ENCODE measurements at regions of chr1 and their contacts with region 1.

Region 1: GRCh38 chr1:160085686-160086455 is 4.5 kb downstream of the KCNJ9 start:
- DNase-seq: peak; percentile 92
- ATAC-seq: peak; percentile 76
- H3K4me3 Mint-ChIP-seq: no peak overlapping the region
- H3K27ac Mint-ChIP-seq: no peak overlapping the region
- H3K4me1 Mint-ChIP-seq: peaks cover 5% of the 10 kb centered on the region
- H3K27me3 Mint-ChIP-seq: peaks cover 21% of the 10 kb centered on the region
- CTCF ChIP-seq: peak; percentile 91

Region 2: DNA sequence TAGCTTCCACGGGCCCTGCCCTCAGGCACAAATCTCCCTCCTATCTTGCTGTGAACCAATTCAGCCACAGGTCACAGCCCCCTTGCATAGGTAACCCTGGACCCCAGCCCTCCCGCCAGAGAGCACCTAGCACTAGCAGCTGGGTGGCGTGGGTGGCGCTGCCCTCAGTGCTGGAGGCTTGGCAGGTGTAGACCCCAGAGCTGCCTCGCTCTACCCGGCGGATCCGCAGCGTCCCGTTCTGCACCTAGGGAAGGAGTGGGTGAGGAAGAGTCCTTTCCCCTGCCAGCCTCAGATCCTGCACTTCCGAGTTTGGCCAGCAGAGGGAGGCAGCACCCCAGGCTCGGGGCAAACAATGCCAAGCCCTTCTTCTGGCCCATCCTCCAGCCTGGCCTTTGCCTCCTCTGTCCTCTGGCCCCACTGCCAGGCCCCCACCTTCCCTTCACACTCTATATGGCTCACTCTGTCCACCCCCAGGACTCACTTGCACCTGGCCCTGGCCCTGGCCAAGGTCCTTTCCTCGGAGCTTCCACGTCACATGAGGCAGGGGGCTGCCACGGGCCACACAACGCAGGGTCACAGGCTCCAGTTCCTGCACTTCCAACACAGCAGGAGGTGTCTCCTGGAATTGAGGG is 149.5 kb before region 1 on chr1:
- CTCF ChIA-PET with region 1: interaction called, 6 read pairs
- POLR2A ChIA-PET with region 1: no interaction called
- intact Hi-C with region 1: loop called (anchors 5 kb)
- DNase-seq: peak; percentile 85
- ATAC-seq: peak; percentile 96
- H3K4me3 Mint-ChIP-seq: no peak overlapping the region
- H3K27ac Mint-ChIP-seq: no peak overlapping the region
- H3K4me1 Mint-ChIP-seq: peaks cover 3% of the 10 kb centered on the region
- H3K27me3 Mint-ChIP-seq: peaks cover 2% of the 10 kb centered on the region
- CTCF ChIP-seq: peak; percentile 97

Region 3: GRCh38 chr1:159970932-159971342 is 114.9 kb before region 1 on chr1:
- CTCF ChIA-PET with region 1: no interaction called
- POLR2A ChIA-PET with region 1: no interaction called
- intact Hi-C with region 1: no loop called
- DNase-seq: no peak
- ATAC-seq: no peak
- H3K4me3 Mint-ChIP-seq: no peak overlapping the region
- H3K27ac Mint-ChIP-seq: no peak overlapping the region
- H3K4me1 Mint-ChIP-seq: no peaks in the 10 kb centered on the region
- H3K27me3 Mint-ChIP-seq: peaks cover 14% of the 10 kb centered on the region
- CTCF ChIP-seq: no peak

Region 4: DNA sequence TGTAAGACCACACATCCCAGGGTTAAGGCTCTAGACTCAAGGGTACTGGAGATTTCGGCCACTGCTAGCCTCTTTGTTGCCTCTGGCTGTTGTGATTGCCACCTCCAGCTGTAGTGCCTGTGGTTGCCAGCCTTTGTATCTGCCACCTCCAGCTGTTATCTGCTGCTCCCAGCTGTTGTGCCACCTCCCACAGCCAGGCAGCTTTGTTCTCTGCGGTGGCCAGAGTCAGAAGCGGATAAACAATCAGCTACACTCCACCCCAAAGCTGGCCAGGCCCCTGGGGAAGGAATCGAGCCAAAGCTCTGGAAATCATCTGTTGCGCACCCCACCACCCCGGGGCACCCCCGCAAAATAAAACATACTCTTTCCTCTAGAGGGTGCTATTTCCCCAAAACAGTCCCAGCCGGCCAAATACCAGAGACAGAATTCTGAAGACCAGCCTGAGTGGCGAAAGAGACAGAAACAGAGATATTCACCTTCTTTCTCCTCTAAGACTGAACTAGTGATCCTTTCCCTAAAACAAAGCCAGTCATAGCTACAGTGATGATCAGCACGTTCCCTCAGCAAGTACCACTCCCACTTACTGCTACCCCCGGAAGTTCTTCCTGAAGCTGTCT is 39.3 kb before region 1 on chr1:
- CTCF ChIA-PET with region 1: interaction called, 693 read pairs
- POLR2A ChIA-PET with region 1: interaction called, 5 read pairs
- intact Hi-C with region 1: no loop called
- DNase-seq: peak; percentile 54
- ATAC-seq: peak; percentile 87
- H3K4me3 Mint-ChIP-seq: peak overlapping the region; percentile 70
- H3K27ac Mint-ChIP-seq: peak overlapping the region; percentile 81
- H3K4me1 Mint-ChIP-seq: peaks cover 12% of the 10 kb centered on the region
- H3K27me3 Mint-ChIP-seq: peaks cover 12% of the 10 kb centered on the region
- CTCF ChIP-seq: peak; percentile 91

Region 5: DNA sequence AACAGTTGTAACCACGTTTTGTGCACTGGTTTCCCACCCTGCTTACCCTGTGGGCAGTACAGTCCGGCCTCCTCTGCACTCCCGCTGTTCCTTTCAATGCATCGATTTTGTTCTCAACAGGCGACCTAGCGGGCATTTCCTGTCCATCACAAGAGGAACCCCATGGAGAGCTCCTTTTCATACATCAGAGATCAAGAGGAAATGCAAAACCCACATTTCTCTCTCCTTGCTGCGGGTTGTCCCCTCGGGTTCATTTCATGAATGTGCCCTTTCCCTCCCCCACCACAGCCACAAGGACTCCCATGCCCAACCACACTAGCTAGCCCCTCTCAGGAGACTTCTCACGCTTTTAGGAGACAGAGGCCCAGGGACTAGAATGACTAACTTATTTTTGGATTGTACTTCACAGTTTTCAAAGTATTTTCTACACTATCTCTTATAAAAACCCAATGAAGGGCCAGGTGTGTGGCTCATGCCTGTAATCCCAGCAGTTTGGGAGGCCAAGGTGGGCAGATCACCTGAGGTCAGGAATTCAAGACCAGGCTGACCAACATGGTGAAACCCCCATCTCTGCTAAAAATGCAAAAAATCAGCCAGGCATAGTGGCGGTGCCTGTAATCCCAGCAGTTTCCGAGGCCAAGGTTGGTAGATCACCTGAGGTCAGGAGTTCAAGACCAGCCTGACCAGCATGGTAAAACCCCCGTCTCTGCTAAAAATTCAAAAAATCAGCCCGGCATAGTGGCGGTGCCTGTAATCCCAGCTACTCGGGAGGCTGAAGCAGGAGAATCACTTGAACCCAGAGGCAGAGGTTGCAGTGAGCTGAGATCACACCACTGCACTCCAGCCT is 83.9 kb after region 1 on chr1:
- CTCF ChIA-PET with region 1: interaction called, 7 read pairs
- POLR2A ChIA-PET with region 1: no interaction called
- intact Hi-C with region 1: loop called (anchors 5 kb)
- DNase-seq: peak; percentile 85
- ATAC-seq: peak; percentile 67
- H3K4me3 Mint-ChIP-seq: no peak overlapping the region
- H3K27ac Mint-ChIP-seq: peak overlapping the region; percentile 30
- H3K4me1 Mint-ChIP-seq: peaks cover 33% of the 10 kb centered on the region
- H3K27me3 Mint-ChIP-seq: peaks cover 11% of the 10 kb centered on the region
- CTCF ChIP-seq: no peak

Region 6: GRCh38 chr1:160376525-160377131 is 290.8 kb after region 1 on chr1:
- CTCF ChIA-PET with region 1: interaction called, 17 read pairs
- POLR2A ChIA-PET with region 1: no interaction called
- intact Hi-C with region 1: no loop called
- DNase-seq: peak; percentile 41
- ATAC-seq: peak; percentile 85
- H3K4me3 Mint-ChIP-seq: no peak overlapping the region
- H3K27ac Mint-ChIP-seq: no peak overlapping the region
- H3K4me1 Mint-ChIP-seq: peaks cover 11% of the 10 kb centered on the region
- H3K27me3 Mint-ChIP-seq: no peaks in the 10 kb centered on the region
- CTCF ChIP-seq: peak; percentile 95

Measured in activated CD8-positive, alpha-beta T cell treated with anti-CD3 and anti-CD28 coated beads for 36 hours (primary cell).